ENCODE measurements at regions of chr16 and their contacts with region 1.

Region 1: GRCh38 chr16:4734063-4734729 is at the starts of genes ANKS3 and DNAAF8:
- DNase-seq: peak; percentile 96
- H3K4me3 ChIP-seq: peak within 1 kb of the TSS; percentile 62 to 100 (median 76)
- H3K27ac ChIP-seq: peak within 1 kb of the TSS; percentile 46
- H3K4me1 ChIP-seq: peaks cover 5% of the 10 kb centered on the region
- H3K27me3 ChIP-seq: no peaks in the 10 kb centered on the region
- CTCF ChIP-seq: no peak
- POLR2A ChIP-seq: peak; percentile 45
- total RNA-seq, gene ANKS3: 22.5 and 24.0 TPM in 2 replicates
- total RNA-seq, gene DNAAF8: 1.0 TPM in 1 of 2 replicates, not detected in the other

Region 2: DNA sequence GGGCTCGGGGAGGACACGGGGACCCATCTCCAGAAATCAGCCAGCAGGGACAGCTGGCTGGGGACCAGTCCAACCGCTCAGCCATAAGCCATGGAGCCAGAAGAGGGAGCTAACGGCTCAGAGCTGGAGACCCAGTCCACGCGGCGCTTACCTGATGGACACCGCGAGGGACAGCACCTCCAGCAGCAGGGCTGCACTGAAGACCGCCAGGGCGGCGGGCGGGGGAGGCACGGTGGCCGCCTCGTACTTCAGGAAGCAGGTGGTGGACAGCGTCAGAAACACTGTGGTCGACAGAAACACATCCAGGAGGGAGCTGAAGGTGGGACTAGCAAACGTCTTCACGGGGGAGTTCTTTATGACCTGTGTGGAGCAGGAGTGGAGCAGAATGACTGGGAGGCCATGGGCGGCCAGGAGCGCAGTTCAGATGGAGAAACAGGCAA is 751.1 kb before region 1 on chr16:
- CTCF ChIA-PET with region 1: no interaction called
- POLR2A ChIA-PET with region 1: no interaction called
- dilution Hi-C with region 1: no loop called
- intact Hi-C with region 1: no loop called
- DNase-seq: peak; percentile 72
- H3K4me3 ChIP-seq: no peak overlapping the region
- H3K27ac ChIP-seq: no peak overlapping the region
- H3K4me1 ChIP-seq: no peaks in the 10 kb centered on the region
- H3K27me3 ChIP-seq: no peaks in the 10 kb centered on the region
- CTCF ChIP-seq: peak; percentile 71 to 90
- POLR2A ChIP-seq: no peak

Region 3: GRCh38 chr16:4561596-4561995 is 172.6 kb before region 1 on chr16:
- CTCF ChIA-PET with region 1: no interaction called
- POLR2A ChIA-PET with region 1: no interaction called
- dilution Hi-C with region 1: no loop called
- intact Hi-C with region 1: no loop called
- DNase-seq: no peak
- H3K4me3 ChIP-seq: no peak overlapping the region
- H3K27ac ChIP-seq: no peak overlapping the region
- H3K4me1 ChIP-seq: no peaks in the 10 kb centered on the region
- H3K27me3 ChIP-seq: peaks cover 0 to 7% of the 10 kb centered on the region in 2 experiments
- CTCF ChIP-seq: no peak
- POLR2A ChIP-seq: no peak

Region 4: GRCh38 chr16:4616047-4616811 is 118.0 kb before region 1 on chr16:
- CTCF ChIA-PET with region 1: no interaction called
- POLR2A ChIA-PET with region 1: interaction called, 8 read pairs
- dilution Hi-C with region 1: no loop called
- intact Hi-C with region 1: loop called (anchors 2 kb)
- DNase-seq: peak; percentile 99
- H3K4me3 ChIP-seq: peak overlapping the region in 2 of 3 experiments; percentile 17 to 19
- H3K27ac ChIP-seq: peak overlapping the region; percentile 79
- H3K4me1 ChIP-seq: peaks cover 21% of the 10 kb centered on the region
- H3K27me3 ChIP-seq: no peaks in the 10 kb centered on the region
- CTCF ChIP-seq: peak; percentile 16 to 58
- POLR2A ChIP-seq: peak; percentile 71

Region 5: DNA sequence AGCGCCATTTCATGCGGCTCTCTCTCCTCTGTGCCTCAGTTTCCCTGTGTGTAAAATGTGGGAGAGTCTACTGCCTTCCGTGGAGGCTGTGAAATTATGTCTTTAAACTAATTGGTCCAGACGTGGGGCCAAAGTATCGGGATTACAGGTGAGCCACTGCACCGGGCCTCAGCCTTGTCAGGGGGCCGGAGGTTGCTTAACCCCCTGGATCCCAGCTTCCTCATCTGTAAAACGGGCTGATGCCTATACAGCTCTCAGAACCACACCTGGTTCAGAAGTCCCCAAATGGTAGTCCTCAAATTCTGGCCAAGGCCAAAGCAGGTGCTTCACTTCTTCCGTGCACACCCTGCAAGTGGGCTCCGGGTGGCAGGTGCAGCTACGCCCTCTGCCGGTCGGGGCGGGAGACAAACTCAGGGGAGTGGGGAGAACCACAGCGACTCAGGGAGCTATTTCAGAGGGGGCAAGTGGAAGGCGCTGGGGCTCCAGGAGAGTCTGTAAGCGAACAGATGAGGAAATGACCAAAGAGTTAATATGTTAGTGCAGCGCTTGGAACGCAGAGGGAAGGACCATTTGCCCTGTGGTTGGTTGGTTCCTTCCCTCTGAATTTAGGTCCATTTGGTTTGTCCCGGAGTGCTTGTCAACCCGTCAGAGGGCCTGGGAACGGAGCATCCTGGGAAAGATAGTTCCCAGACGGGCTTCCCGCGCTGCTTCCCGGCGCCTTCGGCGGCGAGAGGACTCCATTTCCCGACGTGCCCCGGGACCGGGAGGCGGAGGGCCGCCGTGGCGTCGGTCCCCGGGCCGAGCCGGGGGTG is 110.0 kb before region 1 on chr16 and contains the start of gene MGRN1:
- CTCF ChIA-PET with region 1: interaction called, 3 read pairs
- POLR2A ChIA-PET with region 1: no interaction called
- dilution Hi-C with region 1: no loop called
- intact Hi-C with region 1: loop called (anchors 1 kb)
- DNase-seq: peak; percentile 99
- H3K4me3 ChIP-seq: peak within 1 kb of the TSS; percentile 64 to 77 (median 69)
- H3K27ac ChIP-seq: peak within 1 kb of the TSS; percentile 80
- H3K4me1 ChIP-seq: peaks cover 10% of the 10 kb centered on the region
- H3K27me3 ChIP-seq: no peaks in the 10 kb centered on the region
- CTCF ChIP-seq: peak; percentile 93 to 94
- POLR2A ChIP-seq: no peak
- total RNA-seq, gene MGRN1: 73.0 and 80.9 TPM in 2 replicates

Region 6: DNA sequence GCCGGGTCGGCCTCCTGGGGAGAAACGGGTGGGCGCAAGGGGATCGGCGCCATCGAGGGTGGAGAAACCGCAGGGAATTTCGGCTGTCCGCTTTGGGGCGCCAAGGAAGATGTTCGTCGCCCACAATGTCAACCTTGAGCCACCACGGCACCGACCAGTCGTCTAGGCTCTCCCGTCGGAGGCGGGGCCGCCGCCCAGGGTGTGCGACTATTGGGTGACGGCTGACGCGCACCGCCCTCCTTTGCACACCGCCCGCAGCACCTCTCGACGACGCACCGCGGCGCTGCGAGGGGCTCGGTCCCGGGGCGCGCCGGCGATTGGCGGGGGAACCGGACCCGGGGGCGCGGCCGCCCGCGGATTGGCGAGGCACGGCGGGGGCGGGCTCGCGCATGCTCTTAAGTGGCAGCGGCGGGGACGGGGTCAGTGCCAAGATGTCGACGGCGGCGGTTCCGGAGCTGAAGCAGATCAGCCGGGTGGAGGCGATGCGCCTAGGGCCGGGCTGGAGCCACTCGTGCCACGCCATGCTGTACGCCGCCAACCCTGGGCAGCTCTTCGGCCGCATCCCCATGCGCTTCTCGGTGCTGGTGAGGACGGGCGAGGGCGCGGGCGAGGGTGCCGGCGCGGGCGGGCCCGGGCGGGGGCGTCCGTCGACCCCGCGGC is 40.8 kb before region 1 on chr16 and contains the start of gene NUDT16L1:
- CTCF ChIA-PET with region 1: no interaction called
- POLR2A ChIA-PET with region 1: no interaction called
- dilution Hi-C with region 1: no loop called
- intact Hi-C with region 1: loop called (anchors 1 kb)
- DNase-seq: peak; percentile 98
- H3K4me3 ChIP-seq: peak within 1 kb of the TSS; percentile 66 to 93 (median 79)
- H3K27ac ChIP-seq: peak within 1 kb of the TSS; percentile 32
- H3K4me1 ChIP-seq: peaks cover 4% of the 10 kb centered on the region
- H3K27me3 ChIP-seq: no peaks in the 10 kb centered on the region
- CTCF ChIP-seq: peak in 1 of 2 donors; percentile 19
- POLR2A ChIP-seq: peak; percentile 78
- total RNA-seq, gene NUDT16L1: 22.8 and 24.7 TPM in 2 replicates

Region 7: DNA sequence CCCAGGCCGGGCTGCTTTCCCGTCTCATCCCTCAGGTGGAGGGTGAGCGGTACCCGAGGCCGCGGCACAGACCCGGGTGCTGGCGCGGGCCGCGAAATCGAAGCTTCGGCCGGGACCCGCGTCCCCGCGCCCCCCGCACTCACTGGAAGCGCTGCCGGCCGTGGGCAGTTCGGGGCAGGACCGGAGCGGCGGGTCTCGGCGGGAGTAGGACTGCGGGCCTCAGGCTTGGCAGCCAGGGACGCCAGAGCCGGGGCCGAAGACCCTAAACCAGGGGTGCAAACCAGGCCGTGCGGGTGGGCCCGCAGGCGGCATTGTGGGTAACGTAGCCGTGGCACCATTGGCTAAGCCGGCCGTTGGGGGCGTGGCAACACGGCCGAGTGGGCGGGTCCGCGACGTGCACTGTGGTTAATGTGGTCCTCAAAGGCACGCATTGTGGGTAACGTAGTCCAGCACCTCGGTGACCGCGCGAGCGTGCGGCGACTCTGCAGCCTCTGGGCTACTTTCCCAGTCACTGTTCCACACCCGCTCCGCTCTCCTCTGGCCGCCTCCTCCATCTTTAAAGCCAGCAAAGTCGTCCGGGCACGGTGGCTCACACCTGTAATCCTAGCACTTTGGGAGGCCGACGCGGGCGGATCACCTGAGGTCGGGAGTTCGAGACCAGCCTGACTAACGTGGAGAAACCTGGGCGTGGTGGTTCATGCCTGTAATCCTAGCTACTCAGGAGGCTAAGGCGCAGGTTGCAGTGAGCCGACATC is 32.9 kb after region 1 on chr16 and contains the start of gene ZNF500:
- CTCF ChIA-PET with region 1: interaction called, 6 read pairs
- POLR2A ChIA-PET with region 1: interaction called, 4 read pairs
- dilution Hi-C with region 1: no loop called
- intact Hi-C with region 1: loop called (anchors 1 kb)
- DNase-seq: peak; percentile 97
- H3K4me3 ChIP-seq: peak within 1 kb of the TSS; percentile 46 to 98 (median 55)
- H3K27ac ChIP-seq: peak within 1 kb of the TSS; percentile 42
- H3K4me1 ChIP-seq: peaks cover 15% of the 10 kb centered on the region
- H3K27me3 ChIP-seq: no peaks in the 10 kb centered on the region
- CTCF ChIP-seq: no peak
- POLR2A ChIP-seq: peak; percentile 85
- total RNA-seq, gene ZNF500: 12.2 and 13.5 TPM in 2 replicates

Region 8: DNA sequence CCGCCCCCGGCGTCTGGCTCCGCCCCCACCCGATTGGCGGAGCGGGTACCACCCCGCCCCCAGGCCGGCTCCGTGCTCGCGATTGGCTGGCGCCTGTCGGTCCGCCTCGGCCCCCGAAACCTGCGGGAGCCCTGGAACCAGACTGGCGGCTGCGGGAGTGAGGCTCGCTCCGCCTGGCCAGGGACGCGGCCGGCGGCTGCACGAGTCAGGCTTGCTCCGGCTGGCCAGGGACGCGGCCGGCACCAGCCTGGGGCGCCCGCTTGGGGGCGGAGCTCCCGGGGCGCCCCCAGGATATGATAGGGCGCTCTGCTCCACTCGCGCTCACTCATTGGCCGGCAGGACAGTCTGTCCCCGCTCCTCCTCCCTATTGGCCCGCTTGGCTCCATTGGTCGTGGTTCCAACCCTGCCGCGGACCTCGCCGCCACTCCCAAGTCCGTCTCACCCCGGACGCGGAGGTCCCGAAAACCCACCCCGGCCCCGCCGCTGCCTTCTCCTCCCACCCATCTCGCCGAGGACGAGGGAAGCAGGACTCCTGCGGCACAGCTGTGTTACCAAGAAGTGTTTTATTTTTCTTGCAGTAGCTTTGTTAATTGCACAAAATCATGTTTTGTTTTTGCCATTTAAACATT is 68.6 kb after region 1 on chr16:
- CTCF ChIA-PET with region 1: no interaction called
- POLR2A ChIA-PET with region 1: no interaction called
- dilution Hi-C with region 1: no loop called
- intact Hi-C with region 1: loop called (anchors 1 kb)
- DNase-seq: peak; percentile 91
- H3K4me3 ChIP-seq: peak overlapping the region; percentile 59 to 76 (median 75)
- H3K27ac ChIP-seq: no peak overlapping the region
- H3K4me1 ChIP-seq: peaks cover 7% of the 10 kb centered on the region
- H3K27me3 ChIP-seq: no peaks in the 10 kb centered on the region
- CTCF ChIP-seq: no peak
- POLR2A ChIP-seq: peak; percentile 26

Measured in endothelial cell of umbilical vein (primary cell).